GM12878 (cell line): ENCODE measurements at regions of chr7 and their contacts with region 1.

Region 1: GRCh38 chr7:87886875-87887274 is 10.6 kb downstream of the DBF4 start:
- DNase-seq: no peak
- ATAC-seq: no peak
- H3K4me3 ChIP-seq: no peak overlapping the region
- H3K27ac ChIP-seq: no peak overlapping the region
- H3K4me1 ChIP-seq: no peaks in the 10 kb centered on the region
- H3K27me3 ChIP-seq: no peaks in the 10 kb centered on the region
- CTCF ChIP-seq: peak in 2 of 3 experiments; percentile 8 to 32; a peak in 2 of 6 replicates
- EP300 ChIP-seq: no peak
- POLR2A ChIP-seq: no peak
- RAD21 ChIP-seq: peak; percentile 56

Region 2: GRCh38 chr7:87506246-87507180 is 380.4 kb before region 1 on chr7:
- CTCF ChIA-PET with region 1: interaction called, 31 read pairs
- POLR2A ChIA-PET with region 1: no interaction called
- RAD21 ChIA-PET with region 1: interaction called, 20 read pairs
- SMC1A ChIA-PET with region 1: interaction called, 32 read pairs
- in situ Hi-C with region 1: no loop called
- intact Hi-C with region 1: no loop called
- DNase-seq: no peak
- ATAC-seq: peak; percentile 57
- H3K4me3 ChIP-seq: no peak overlapping the region
- H3K27ac ChIP-seq: no peak overlapping the region
- H3K4me1 ChIP-seq: no peaks in the 10 kb centered on the region
- H3K27me3 ChIP-seq: no peaks in the 10 kb centered on the region
- CTCF ChIP-seq: peak; percentile 12 to 55 (median 31); a peak in 4 of 6 replicates
- EP300 ChIP-seq: no peak
- POLR2A ChIP-seq: no peak
- RAD21 ChIP-seq: peak; percentile 69

Region 3: DNA sequence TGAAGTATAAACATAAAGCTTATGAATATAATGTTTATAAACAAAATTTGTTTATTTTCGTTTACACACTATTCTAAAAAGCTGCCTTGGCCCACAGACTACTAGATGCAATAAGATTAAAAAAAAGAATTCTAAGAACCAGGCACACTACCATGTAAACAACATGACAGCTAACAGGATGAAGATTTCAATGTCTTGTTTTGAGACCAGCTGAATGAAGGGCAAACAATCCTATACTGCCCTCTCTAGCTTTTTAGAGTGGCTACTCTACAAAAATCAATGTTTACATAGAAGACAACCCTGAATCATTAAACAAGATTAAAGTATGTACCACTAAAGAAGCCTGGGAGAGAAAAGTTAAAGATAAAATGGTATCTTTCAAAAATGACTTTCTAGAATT is 49.3 kb before region 1 on chr7:
- CTCF ChIA-PET with region 1: interaction called, 11 read pairs
- POLR2A ChIA-PET with region 1: no interaction called
- RAD21 ChIA-PET with region 1: interaction called, 3 read pairs
- SMC1A ChIA-PET with region 1: interaction called, 8 read pairs
- in situ Hi-C with region 1: no loop called
- intact Hi-C with region 1: no loop called
- DNase-seq: no peak
- ATAC-seq: no peak
- H3K4me3 ChIP-seq: no peak overlapping the region
- H3K27ac ChIP-seq: no peak overlapping the region
- H3K4me1 ChIP-seq: no peaks in the 10 kb centered on the region
- H3K27me3 ChIP-seq: no peaks in the 10 kb centered on the region
- CTCF ChIP-seq: no peak
- EP300 ChIP-seq: no peak
- POLR2A ChIP-seq: no peak
- RAD21 ChIP-seq: no peak

Region 4: DNA sequence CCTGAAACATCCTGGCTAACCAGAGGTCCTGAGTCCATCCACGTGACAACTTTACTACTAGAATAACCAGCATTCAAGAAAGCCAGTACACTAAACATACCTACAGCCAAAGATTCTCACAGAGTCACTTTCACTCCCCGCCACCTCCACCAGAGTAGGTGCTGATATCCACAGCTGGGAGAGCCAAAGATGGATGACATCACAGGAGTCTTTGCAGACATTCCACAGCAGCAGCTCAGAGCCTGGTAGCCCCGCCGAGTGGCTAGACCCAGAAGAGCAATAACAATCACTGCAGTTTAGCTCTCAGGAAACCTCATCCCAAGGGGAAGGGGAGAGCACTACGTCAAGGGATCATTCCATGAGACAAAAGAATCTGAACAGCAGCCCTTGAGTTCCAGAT is 33.7 kb after region 1 on chr7:
- CTCF ChIA-PET with region 1: interaction called, 14 read pairs
- POLR2A ChIA-PET with region 1: no interaction called
- RAD21 ChIA-PET with region 1: interaction called, 11 read pairs
- SMC1A ChIA-PET with region 1: interaction called, 34 read pairs
- in situ Hi-C with region 1: no loop called
- intact Hi-C with region 1: no loop called
- DNase-seq: no peak
- ATAC-seq: peak; percentile 8; the same call in 2 of the 3 replicates
- H3K4me3 ChIP-seq: no peak overlapping the region
- H3K27ac ChIP-seq: no peak overlapping the region
- H3K4me1 ChIP-seq: no peaks in the 10 kb centered on the region; the same call in 1 of the 2 replicates
- H3K27me3 ChIP-seq: no peaks in the 10 kb centered on the region
- CTCF ChIP-seq: no peak
- EP300 ChIP-seq: no peak
- POLR2A ChIP-seq: no peak
- RAD21 ChIP-seq: no peak

Region 5: DNA sequence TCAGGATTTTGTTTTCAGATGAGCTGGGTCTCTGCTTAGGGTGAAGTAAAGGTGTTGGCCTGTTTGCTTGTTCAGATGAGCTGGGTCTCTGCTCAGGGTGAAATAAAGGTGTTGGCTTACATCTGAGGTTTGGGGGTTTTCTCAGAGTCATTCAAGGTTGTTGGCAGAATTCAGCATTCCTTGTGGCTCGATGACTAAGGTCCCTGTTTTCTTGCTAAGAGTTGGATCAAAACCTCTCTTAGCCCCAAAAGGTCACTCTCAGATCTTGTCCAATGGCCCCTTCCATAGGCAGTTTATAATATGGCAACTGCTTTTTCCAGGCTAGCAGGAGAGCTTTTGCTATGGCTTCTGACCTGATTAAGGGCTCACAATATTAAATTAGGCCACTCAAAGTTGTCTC is 153.8 kb after region 1 on chr7:
- CTCF ChIA-PET with region 1: no interaction called
- POLR2A ChIA-PET with region 1: no interaction called
- RAD21 ChIA-PET with region 1: no interaction called
- SMC1A ChIA-PET with region 1: no interaction called
- in situ Hi-C with region 1: no loop called
- intact Hi-C with region 1: loop called (anchors 5 kb)
- DNase-seq: no peak
- ATAC-seq: peak; percentile 49
- H3K4me3 ChIP-seq: no peak overlapping the region
- H3K27ac ChIP-seq: no peak overlapping the region
- H3K4me1 ChIP-seq: peaks cover 5% of the 10 kb centered on the region
- H3K27me3 ChIP-seq: no peaks in the 10 kb centered on the region
- CTCF ChIP-seq: no peak
- EP300 ChIP-seq: no peak
- POLR2A ChIP-seq: no peak
- RAD21 ChIP-seq: no peak